Heart left ventricle (tissue), 16 donors: ENCODE measurements at regions of chr3 and their contacts with region 1.

Region 1: DNA sequence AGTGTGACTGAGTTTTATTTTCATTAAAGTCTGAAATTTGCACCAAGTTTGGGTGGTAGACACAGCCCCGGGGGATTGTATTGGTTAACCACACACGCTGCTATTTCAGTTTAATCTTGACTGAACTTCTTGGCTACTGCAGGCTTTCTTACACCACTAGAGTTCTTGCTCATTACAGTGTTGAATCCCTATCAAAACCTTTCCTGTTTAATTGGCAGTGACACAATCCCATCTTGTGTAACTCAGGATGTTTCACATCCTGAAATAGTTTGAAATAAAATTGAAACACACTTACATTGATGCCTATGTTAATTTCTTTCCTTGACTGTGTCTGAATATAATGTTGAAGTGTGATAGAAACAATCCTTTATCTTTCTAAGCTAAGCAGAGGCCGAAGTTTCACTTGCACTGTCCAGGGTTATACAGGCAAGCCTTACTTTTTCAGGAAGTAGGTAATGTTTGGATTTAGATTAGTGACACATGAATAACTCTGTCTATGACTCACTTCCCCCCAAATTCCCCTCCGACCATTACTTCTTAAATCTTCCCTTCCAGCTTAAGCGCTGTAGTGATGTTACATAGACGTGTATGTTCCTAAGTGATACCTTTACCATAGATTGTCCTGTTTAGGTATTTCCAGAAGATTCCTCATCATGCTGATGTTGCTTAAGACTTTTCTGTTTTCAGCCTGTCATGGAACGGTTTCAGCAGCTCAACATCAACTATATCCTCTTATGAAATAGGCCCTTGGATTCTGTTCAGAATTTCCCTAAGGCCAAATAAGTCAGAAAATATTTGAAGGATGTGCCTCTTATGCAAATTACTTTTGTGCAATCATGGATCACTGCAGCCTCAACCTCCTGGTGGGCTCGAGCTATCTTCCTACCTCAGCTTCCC is 16.8 kb downstream of the ATG7 start:
- DNase-seq: peak in 1 of 5 donors; percentile 25
- ATAC-seq: peak; percentile 59 to 82 (median 80)
- H3K4me3 ChIP-seq: peak overlapping the region in 1 of 12 donors; percentile 23
- H3K27ac ChIP-seq: peak overlapping the region; percentile 34 to 93 (median 65)
- H3K4me1 ChIP-seq: peaks cover 13 to 68% (median 32%) of the 10 kb centered on the region in 12 donors
- H3K27me3 ChIP-seq: no peaks in the 10 kb centered on the region
- CTCF ChIP-seq: no peak
- POLR2A ChIP-seq: no peak

Region 2: DNA sequence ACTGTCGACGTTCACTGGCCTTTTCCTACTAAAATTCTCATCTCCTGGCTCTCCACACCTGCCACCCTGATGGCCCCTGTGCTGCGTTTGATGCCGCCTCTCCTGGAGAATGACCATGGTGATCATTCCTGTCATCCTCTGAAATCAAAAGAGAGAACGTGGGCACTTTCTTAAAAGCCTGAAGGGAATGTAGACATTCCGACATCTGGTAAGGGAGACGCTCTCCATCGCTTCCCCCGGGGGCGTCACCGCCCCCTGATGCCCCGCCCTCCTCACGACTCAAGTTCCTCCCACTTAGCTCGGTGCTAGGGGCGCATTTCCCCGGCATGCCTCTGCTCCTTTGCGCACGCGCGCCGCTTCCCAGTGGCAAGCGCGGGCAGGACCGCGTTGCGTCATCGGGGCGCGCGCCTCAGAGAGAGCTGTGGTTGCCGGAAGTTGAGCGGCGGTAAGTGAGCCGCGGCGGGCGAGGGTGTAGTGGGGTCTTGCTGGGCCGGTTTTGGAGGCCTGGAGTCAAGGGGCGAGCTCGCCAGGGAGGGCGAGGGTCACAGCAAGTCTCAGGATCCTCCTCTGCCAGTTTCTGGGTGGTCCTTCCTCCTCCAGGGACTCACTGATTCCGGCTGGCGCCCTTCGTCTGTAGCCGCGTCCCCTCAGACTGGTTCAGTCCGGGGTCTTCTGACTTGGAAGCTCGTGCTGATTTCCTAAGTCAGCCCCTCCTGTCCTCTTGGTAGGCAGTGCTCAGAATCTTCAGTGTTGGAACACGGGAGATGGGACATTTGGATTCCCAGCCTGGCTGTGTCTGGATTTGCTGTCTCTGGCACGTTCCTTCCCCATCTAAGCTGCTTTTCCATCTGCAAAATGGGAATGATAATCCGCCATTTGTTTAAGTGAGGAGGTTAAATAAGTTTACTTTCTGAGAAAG is 16.8 kb before region 1 on chr3 and contains the start of gene ATG7:
- intact Hi-C with region 1: loop called in 1 of 10 experiments (anchors 1 kb)
- DNase-seq: peak; percentile 96 to 99 (median 98)
- ATAC-seq: peak; percentile 97 to 100 (median 100)
- H3K4me3 ChIP-seq: peak within 1 kb of the TSS; percentile 68 to 96 (median 84)
- H3K27ac ChIP-seq: peak within 1 kb of the TSS; percentile 8 to 95 (median 82)
- H3K4me1 ChIP-seq: peaks cover 0 to 47% (median 13%) of the 10 kb centered on the region in 12 donors
- H3K27me3 ChIP-seq: no peaks in the 10 kb centered on the region
- CTCF ChIP-seq: peak in 3 of 12 donors; percentile 17 to 25 (median 17)
- POLR2A ChIP-seq: peak in 1 of 2 donors; percentile 82
- total RNA-seq, gene ATG7: 13.0 to 45.1 (median 14.4) TPM